Activated CD4-positive, alpha-beta T cell treated with anti-CD3 and anti-CD28 coated beads for 36 hours (primary cell): ENCODE measurements at regions of chr1 and their contacts with region 1.

Region 1: DNA sequence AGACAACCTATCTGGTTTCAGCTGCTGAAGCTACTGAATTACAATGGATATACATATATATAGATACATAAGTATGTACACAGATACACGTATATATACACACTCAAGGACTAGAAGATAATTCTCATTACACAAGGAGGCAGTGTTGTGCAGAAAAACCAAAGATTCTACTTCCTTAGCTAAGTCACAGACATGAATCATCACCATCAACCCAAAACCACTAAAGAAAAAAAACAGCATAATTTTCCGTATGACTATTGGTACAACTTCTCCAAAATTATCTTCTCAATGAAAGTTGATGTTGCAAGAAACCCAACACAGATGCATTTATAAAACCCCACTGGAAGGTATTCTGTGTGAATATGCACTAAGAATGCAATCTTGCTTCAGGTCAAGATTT is 36.8 kb upstream of the RPF1 start:
- DNase-seq: no peak
- ATAC-seq: peak; percentile 99
- H3K4me3 Mint-ChIP-seq: no peak overlapping the region
- H3K27ac Mint-ChIP-seq: no peak overlapping the region
- H3K4me1 Mint-ChIP-seq: peaks cover 23% of the 10 kb centered on the region
- H3K27me3 Mint-ChIP-seq: peaks cover 5% of the 10 kb centered on the region

Region 2: DNA sequence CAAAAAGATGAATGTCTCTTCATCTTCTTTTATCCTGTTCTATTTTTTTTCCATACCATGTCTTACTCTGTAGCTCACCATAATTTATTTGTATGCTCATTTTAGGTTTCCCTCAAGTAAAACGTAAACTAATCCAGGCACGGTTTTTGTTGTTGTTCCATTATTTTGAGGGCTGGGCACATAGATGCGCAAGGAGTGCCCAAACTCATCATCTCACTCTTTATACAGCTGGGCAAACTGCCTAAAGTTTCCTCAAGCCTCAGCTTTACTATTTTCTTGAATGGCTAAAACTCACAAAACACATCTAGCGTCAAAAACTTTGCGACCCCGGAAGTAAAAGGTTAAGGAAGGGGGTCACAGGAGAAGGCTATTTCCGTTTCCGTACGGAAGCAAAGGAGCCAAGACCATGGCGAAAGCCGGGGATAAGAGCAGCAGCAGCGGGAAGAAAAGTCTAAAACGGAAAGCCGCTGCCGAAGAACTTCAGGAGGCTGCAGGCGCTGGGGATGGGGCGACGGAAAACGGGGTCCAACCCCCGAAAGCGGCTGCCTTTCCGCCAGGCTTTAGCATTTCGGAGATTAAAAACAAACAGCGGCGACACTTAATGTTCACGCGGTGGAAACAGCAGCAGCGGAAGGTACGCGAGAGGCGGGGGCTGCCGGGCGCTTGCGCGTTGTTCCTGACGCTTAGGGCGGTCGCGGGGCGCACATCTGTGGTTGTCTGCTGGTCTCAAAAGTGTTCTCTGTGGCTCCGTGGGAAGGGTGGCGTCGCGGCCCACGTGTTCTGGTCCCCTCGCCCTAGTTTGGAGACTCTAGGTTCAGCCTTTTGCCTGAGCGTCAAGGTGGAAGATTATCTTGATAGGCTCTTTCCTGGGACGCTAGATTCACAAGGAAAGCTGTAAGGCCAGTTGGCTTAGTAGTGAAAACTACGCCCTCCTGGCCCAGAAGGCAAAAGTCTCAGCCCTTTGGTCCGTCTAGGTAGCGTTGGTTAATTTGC is 36.9 kb after region 1 on chr1 and contains the start of gene RPF1:
- CTCF ChIA-PET with region 1: interaction called, 7 read pairs
- POLR2A ChIA-PET with region 1: interaction called, 3 read pairs
- intact Hi-C with region 1: loop called (anchors 1 to 2 kb)
- DNase-seq: peak; percentile 86
- ATAC-seq: peak; percentile 92
- H3K4me3 Mint-ChIP-seq: peak within 1 kb of the TSS; percentile 92
- H3K27ac Mint-ChIP-seq: peak within 1 kb of the TSS; percentile 98
- H3K4me1 Mint-ChIP-seq: peaks cover 40% of the 10 kb centered on the region
- H3K27me3 Mint-ChIP-seq: peaks cover 17% of the 10 kb centered on the region
- total RNA-seq, gene RPF1: 59.1 to 70.2 TPM

Region 3: DNA sequence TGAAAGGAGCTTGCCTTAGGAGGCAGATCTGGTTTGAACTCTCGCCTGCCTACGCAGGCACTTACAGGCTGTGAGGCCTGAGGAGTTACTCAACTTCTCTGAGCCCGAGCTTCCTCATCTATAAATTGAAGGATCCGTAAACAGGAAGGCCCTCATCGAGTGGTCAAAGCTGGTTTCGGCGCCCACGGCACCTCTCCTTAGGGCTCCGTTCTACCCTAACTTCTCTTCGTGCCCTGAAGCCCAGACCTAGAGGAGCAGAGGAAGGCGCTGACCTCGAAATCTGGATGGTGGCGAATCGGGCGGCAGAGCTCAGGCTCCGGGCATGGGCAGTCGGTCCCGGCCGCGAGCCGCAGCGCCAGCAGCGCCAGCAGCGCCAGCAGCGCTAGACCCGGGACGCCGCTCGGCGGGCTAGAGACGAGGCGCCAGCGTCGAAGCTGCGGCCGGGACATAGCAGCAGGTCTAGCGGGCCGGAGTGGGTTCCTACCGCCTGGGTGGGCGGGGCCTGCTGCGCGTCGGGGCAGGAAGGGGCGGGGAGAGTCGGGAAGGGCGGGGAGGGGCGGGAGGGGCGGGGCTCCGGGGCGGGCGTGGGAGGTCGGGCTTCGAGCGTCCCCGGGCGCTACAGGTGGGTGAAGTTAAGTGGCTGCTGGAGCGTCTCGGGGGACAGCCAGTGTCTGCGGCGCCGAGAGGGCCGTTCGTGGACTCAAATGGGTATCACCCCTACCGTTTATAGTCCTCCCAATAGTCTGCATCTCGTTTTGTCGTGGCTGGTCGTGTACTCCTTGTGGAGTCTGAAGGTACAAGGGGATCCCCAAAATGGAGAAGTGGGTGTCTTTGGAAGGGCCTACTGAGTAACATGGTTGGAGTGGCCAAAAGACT is 131.9 kb after region 1 on chr1 and contains the start of gene CTBS:
- CTCF ChIA-PET with region 1: interaction called, 4 read pairs
- POLR2A ChIA-PET with region 1: interaction called, 8 read pairs
- intact Hi-C with region 1: loop called (anchors 2 kb)
- DNase-seq: peak; percentile 94
- ATAC-seq: peak; percentile 85
- H3K4me3 Mint-ChIP-seq: peak within 1 kb of the TSS; percentile 97
- H3K27ac Mint-ChIP-seq: peak within 1 kb of the TSS; percentile 99
- H3K4me1 Mint-ChIP-seq: peaks cover 45% of the 10 kb centered on the region
- H3K27me3 Mint-ChIP-seq: no peaks in the 10 kb centered on the region
- total RNA-seq, gene CTBS: 13.5 to 17.3 TPM

Region 4: DNA sequence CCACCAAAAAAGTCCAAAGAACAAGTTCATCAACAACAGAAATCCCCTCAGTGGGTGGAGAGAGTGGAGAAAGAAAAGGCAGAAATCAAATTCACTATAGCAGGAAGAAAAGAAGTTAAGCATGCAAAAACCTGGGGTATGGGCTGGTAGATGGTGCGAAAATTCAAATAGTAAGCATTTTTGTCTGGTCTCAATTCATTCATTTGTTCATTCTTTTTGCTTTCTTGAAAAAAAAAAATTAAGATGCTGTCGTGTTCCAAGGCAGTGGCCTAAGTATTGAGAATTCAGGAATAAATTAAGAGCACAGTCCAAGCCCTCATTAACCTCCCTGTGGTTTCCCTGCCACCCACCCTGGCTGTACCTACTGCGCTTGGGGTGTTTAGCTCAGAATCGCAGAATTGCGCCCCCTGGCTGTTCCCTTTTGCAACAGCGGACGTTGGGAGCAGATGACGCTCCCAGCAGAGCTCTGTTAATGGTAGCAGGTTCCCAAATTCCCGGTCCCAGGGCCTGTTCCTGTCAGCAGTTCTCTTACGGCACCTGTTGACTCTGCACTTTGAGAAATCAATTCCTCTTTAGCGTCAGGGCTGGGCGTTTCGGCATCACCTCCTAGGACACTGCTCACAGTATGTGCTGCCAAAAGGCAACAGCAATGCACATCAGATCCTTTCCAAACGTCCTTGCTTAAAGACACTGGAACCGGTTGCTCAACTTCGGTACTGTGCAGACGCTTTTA is 282.0 kb after region 1 on chr1:
- CTCF ChIA-PET with region 1: interaction called, 6 read pairs
- POLR2A ChIA-PET with region 1: no interaction called
- intact Hi-C with region 1: loop called in 1 of 2 experiments (anchors 1 kb)
- DNase-seq: peak; percentile 74
- ATAC-seq: peak; percentile 64
- H3K4me3 Mint-ChIP-seq: no peak overlapping the region
- H3K27ac Mint-ChIP-seq: no peak overlapping the region
- H3K4me1 Mint-ChIP-seq: peaks cover 18% of the 10 kb centered on the region
- H3K27me3 Mint-ChIP-seq: no peaks in the 10 kb centered on the region

Region 5: DNA sequence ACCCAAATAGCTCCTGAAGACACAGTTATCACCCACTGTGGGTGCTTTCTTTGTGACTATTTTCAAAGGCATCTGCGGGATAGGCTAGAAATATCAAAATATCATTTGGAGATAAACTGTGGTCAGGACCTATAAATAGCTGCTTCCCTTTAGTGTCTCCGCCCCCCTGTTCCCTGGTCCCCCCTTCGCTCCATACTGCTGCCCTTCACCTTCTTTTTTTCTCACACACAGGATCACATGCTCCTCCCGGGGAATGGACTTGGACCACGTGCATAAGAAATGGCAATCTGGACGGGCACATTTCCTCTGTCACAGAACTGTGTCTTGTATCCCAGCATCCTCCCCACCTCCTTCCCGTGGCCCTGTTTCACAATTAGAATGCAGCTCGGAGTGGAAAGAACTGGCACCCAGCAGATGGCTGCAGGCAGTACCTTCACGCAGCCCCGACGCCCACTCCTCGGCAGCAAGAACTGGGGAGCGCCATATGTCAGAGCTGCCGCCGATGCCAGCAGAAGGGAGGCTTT is 316.8 kb after region 1 on chr1:
- CTCF ChIA-PET with region 1: interaction called, 29 read pairs
- POLR2A ChIA-PET with region 1: no interaction called
- intact Hi-C with region 1: no loop called
- DNase-seq: peak; percentile 58
- ATAC-seq: peak; percentile 64
- H3K4me3 Mint-ChIP-seq: peak overlapping the region; percentile 29
- H3K27ac Mint-ChIP-seq: peak overlapping the region; percentile 14
- H3K4me1 Mint-ChIP-seq: peaks cover 16% of the 10 kb centered on the region
- H3K27me3 Mint-ChIP-seq: peaks cover 8% of the 10 kb centered on the region

Region 6: GRCh38 chr1:84772428-84772943 is 330.2 kb after region 1 on chr1:
- CTCF ChIA-PET with region 1: interaction called, 10 read pairs
- POLR2A ChIA-PET with region 1: no interaction called
- intact Hi-C with region 1: loop called (anchors 1 to 5 kb)
- DNase-seq: peak; percentile 87
- ATAC-seq: peak; percentile 78
- H3K4me3 Mint-ChIP-seq: no peak overlapping the region
- H3K27ac Mint-ChIP-seq: no peak overlapping the region
- H3K4me1 Mint-ChIP-seq: no peaks in the 10 kb centered on the region
- H3K27me3 Mint-ChIP-seq: peaks cover 2% of the 10 kb centered on the region

Region 7: DNA sequence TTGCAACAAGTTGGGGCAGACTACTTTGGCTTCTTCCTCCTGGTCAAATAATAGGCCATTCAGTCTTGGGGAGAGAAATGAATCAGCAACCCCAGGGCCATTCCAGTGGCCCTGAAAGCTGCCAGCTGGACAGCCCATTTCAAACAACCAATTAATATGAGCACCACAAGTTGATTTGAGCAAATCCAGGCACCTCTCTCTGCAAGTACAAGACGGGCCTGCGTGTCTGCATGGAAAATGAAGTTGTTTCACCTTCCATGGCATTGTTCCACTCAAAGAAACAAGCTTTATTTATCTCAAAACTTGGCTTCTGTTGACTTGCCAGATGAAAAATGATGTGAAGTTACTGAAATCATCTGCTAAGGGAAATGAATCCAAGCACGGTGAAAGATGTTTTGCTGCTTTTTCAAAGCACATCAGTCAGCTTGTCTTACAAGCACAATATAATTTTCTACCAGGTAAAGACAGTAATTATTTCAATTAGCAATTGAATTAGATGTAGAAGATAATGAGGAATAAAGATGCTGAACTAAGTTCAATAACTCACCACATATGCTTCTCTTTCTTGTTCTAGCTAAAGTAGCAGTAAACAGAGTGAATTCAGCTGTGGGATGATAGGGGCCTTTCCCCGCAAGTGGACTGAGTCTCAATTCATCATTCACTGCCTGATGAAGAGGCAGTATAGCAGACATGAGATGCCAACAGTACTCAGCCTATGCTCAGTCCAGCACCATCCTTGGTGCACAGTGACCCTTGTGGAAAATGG is 343.2 kb after region 1 on chr1:
- CTCF ChIA-PET with region 1: no interaction called
- POLR2A ChIA-PET with region 1: no interaction called
- intact Hi-C with region 1: no loop called
- DNase-seq: no peak
- ATAC-seq: no peak
- H3K4me3 Mint-ChIP-seq: no peak overlapping the region
- H3K27ac Mint-ChIP-seq: no peak overlapping the region
- H3K4me1 Mint-ChIP-seq: peaks cover 13% of the 10 kb centered on the region
- H3K27me3 Mint-ChIP-seq: no peaks in the 10 kb centered on the region

Region 8: DNA sequence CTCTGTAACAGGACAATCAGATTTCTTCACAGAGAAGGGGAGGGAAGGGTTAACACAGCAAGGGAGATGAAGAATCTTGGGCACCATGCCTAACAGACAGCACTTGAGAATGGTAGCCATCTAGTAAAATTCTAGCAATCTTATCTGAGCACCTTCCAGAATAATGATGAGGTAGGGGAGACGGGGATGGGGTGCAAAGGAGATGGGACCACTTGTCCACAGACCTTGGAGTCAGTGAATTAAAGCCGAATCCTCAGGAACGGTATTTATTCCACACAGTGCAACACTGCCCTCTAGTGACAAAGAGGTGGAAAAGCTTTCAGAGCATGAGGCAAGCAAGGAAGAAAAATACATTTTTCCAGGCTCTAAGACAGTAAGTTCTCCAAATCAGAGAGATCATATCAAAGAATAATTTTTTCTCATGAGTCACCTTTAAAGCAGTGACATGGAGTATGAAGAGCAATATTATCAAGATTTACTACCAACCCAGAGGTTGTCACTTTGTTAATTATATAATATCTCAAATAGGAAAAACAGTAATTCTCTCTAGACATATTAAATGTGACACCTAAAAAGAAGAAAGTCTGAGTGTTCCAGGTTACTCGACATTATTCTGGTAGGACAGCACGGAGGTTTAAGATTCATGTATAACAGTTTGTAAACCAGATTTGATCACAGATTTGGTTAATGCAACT is 494.0 kb after region 1 on chr1:
- CTCF ChIA-PET with region 1: no interaction called
- POLR2A ChIA-PET with region 1: no interaction called
- intact Hi-C with region 1: loop called (anchors 2 kb)
- DNase-seq: peak; percentile 25
- ATAC-seq: peak; percentile 53
- H3K4me3 Mint-ChIP-seq: no peak overlapping the region
- H3K27ac Mint-ChIP-seq: no peak overlapping the region
- H3K4me1 Mint-ChIP-seq: peaks cover 4% of the 10 kb centered on the region
- H3K27me3 Mint-ChIP-seq: no peaks in the 10 kb centered on the region